Aorta (tissue), 5 donors: ENCODE measurements at regions of chr2 and their contacts with region 1.

Region 1: DNA sequence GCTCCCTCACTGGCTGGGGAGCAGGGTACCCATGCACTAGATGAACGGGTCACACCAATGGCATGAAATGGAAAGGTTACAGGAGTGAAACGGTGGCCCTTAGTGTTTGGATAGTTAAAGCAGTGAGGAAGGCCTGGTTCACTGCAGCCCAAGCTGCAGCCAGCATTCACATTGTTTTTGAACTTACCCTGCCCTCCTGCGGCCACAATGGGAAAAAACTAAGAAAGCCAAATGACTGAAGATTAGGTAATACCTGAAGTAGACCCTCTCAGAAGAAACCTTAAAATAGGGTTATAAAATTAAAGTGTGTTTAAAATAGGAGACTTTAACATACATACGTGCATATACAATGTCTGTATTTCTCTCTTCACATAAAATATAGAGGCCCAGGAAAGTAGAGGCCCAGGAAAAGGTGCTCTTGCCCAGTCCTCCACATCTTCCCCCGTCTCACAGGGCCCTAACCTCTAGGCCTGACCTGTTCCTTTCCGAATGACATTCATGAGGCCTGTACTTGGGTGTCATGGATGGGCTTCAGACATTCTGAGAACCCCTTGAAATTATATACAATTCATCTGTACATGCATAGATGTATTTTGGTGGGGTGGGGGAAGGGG is 33.3 kb downstream of the DOK1 start:
- DNase-seq: peak; percentile 75 to 81
- ATAC-seq: peak; percentile 91
- H3K4me3 ChIP-seq: no peak overlapping the region
- H3K27ac ChIP-seq: no peak overlapping the region
- H3K4me1 ChIP-seq: peaks cover 1 to 3% of the 10 kb centered on the region in 2 donors
- H3K27me3 ChIP-seq: no peaks in the 10 kb centered on the region

Region 2: GRCh38 chr2:74482801-74483674 is 104.7 kb before region 1 on chr2 and contains the starts of genes CCDC142 and TTC31:
- intact Hi-C with region 1: loop called (anchors 1 kb)
- DNase-seq: peak; percentile 97 to 98
- ATAC-seq: peak; percentile 99
- H3K4me3 ChIP-seq: peak within 1 kb of the TSS; percentile 50 to 62
- H3K27ac ChIP-seq: peak within 1 kb of the TSS in 1 of 2 donors; percentile 53
- H3K4me1 ChIP-seq: peaks cover 0 to 3% of the 10 kb centered on the region in 2 donors
- H3K27me3 ChIP-seq: no peaks in the 10 kb centered on the region
- total RNA-seq, gene CCDC142: 16.1 to 26.0 TPM
- total RNA-seq, gene TTC31: 19.2 to 29.5 TPM

Region 3: DNA sequence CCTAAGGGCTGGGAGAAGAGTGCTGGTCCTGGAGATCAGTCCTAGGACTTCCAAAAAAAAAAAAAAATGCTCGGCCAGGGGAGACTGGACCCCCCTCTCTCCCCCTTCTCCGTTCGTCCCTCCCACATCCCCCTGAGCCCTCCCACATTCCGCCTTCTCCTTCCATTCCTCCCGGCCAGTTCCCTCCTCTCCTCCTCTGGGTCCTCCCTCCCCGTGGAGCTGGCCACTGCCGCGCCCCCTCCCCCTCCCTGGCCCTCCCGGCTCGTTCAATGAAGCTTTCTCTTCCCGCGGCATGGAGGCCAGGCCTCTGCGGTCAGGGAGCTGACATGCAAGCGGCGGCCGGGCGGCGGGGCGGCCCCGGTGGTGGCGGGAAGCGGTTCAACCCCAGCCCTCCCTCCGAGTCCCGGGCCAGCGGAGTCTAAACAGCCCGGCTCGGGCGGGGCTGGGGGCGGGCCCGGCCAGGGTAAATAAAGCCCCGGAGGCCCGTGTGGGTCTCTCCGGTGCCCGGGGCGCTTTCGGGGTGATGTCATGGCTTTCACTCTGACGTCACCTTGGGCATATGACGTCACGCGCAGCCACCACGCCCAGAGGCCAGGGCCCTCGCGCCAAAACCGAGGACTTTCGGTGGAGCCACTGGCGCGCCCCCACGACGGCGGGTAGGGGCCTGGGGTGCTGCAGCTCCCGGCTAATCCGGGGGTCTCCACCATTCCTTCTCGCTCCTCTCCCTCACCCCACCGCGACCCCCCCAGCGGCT is 33.7 kb before region 1 on chr2 and contains the start of gene LOXL3:
- intact Hi-C with region 1: loop called in 1 of 2 experiments (anchors 5 kb)
- DNase-seq: peak; percentile 93 to 94
- ATAC-seq: peak; percentile 91
- H3K4me3 ChIP-seq: peak within 1 kb of the TSS; percentile 39 to 74
- H3K27ac ChIP-seq: peak within 1 kb of the TSS in 1 of 2 donors; percentile 65
- H3K4me1 ChIP-seq: no peaks in the 10 kb centered on the region
- H3K27me3 ChIP-seq: no peaks in the 10 kb centered on the region
- total RNA-seq, gene LOXL3: 18.9 to 27.1 TPM

Region 4: GRCh38 chr2:74653985-74654882 is 66.5 kb after region 1 on chr2 and contains the start of gene SEMA4F:
- intact Hi-C with region 1: no loop called
- DNase-seq: peak; percentile 97 to 98
- ATAC-seq: peak; percentile 99
- H3K4me3 ChIP-seq: peak within 1 kb of the TSS; percentile 35 to 51
- H3K27ac ChIP-seq: no peak within 1 kb of the TSS
- H3K4me1 ChIP-seq: no peaks in the 10 kb centered on the region
- H3K27me3 ChIP-seq: no peaks in the 10 kb centered on the region
- total RNA-seq, gene SEMA4F: 7.7 to 10.8 TPM

Region 5: DNA sequence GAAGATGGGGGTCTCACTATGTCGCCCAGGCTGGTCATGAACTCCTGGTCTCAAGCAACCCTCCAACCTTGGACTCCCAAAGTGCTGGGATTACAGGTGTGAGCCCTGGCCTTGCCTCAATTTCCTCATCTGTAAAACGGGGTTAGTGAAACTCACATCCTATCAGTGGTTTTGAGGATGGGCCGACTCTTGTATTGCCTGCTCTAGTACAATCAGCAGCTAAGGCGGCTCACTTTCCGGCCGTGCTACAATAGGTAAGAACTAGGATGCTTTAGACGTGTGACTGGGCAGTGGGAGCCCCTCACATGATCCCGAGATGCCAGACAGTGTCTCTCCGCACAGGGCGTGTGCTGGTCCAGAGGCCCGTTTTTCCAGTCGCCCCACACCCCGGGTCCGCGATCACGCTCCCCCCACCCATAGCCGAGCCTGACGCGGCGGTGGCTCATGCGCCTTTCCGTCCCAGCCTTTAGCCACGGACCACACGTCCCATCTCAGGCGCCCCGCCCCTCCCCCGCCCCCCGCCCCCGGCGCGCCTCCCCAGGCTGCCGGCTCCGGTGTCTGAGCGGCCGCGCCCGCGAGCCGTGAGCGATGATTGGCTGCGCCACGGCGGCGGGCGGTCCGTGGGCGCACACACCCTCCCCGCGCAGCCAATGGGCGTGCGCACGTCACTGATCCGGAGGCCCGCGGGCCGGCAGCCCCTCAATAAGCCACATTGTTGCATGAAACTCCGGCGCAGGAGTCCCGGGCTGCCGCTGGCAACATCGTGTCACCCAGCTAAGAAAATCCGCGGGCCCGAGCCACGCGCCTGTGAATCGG is 245.9 kb after region 1 on chr2 and contains the start of gene HK2:
- intact Hi-C with region 1: no loop called
- DNase-seq: peak; percentile 93 to 95
- ATAC-seq: peak; percentile 95
- H3K4me3 ChIP-seq: peak within 1 kb of the TSS; percentile 46 to 51
- H3K27ac ChIP-seq: peak within 1 kb of the TSS in 1 of 2 donors; percentile 54
- H3K4me1 ChIP-seq: peaks cover 0 to 5% of the 10 kb centered on the region in 2 donors
- H3K27me3 ChIP-seq: no peaks in the 10 kb centered on the region
- total RNA-seq, gene HK2: 23.5 to 26.4 TPM